ENCODE measurements at regions of chr17 and their contacts with region 1.

Region 1: GRCh38 chr17:54426296-54426886 is 474.3 kb upstream of the TOM1L1 start:
- DNase-seq: no peak
- ATAC-seq: no peak
- H3K4me3 ChIP-seq: no peak overlapping the region
- H3K27ac ChIP-seq: no peak overlapping the region
- H3K4me1 ChIP-seq: no peaks in the 10 kb centered on the region
- H3K27me3 ChIP-seq: no peaks in the 10 kb centered on the region

Region 2: GRCh38 chr17:54368906-54369305 is 57.5 kb before region 1 on chr17:
- intact Hi-C with region 1: loop called in 1 of 4 experiments (anchors 10 kb)
- DNase-seq: no peak
- ATAC-seq: no peak
- H3K4me3 ChIP-seq: no peak overlapping the region
- H3K27ac ChIP-seq: no peak overlapping the region
- H3K4me1 ChIP-seq: no peaks in the 10 kb centered on the region
- H3K27me3 ChIP-seq: no peaks in the 10 kb centered on the region

Measured in right cardiac atrium (tissue), 5 donors.